ENCODE measurements at regions of chr11 and their contacts with region 1.

Region 1: DNA sequence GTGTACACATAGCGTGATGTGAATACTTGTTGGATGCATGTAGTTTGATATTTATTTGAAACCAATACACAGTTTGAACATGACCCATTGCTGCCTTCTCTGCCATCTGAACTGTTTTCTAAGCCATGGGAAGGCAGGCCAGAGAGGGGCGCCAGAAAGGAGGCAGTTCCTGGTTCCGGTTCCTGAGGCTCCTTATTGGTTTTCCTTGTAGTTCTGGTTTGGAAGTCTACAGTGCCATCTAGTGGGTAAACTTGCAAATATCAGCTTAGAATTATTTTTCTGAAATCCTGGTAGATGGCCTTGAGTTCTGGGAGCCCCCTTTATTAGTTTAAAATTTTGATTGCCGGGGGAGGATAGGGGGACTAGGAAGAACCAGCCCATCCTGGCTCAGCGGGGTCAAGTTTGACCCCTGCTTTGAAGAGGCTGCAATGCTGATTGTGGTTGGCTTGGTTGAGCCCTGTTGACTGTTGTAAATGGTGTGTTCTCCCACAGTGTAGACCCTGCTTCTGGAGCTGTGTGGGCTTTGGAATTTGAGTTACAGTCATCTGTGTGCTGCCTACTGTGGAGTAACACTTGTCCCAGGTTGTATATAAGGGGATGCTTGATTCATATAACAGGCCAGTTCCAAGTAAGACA is 48.4 kb downstream of the GRAMD1B start:
- DNase-seq: peak in 1 of 2 experiments; percentile 62
- H3K4me3 ChIP-seq: no peak overlapping the region
- H3K27ac ChIP-seq: no peak overlapping the region
- H3K4me1 ChIP-seq: peaks cover 2 to 15% (median 8%) of the 10 kb centered on the region in 4 experiments; a peak in 6 of 7 replicates
- H3K27me3 ChIP-seq: no peaks in the 10 kb centered on the region; a peak in 1 of 7 replicates
- CTCF ChIP-seq: peak; percentile 48 to 97 (median 76)
- EP300 ChIP-seq: no peak
- POLR2A ChIP-seq: no peak
- RAD21 ChIP-seq: peak; percentile 89 to 96

Region 2: GRCh38 chr11:123308077-123308476 is 170.4 kb before region 1 on chr11:
- CTCF ChIA-PET with region 1: interaction called, 13 read pairs
- POLR2A ChIA-PET with region 1: interaction called, 5 read pairs
- DNase-seq: no peak
- H3K4me3 ChIP-seq: no peak overlapping the region
- H3K27ac ChIP-seq: no peak overlapping the region
- H3K4me1 ChIP-seq: peaks cover 5 to 10% (median 7%) of the 10 kb centered on the region in 4 experiments; a peak in 6 of 7 replicates
- H3K27me3 ChIP-seq: peaks cover 0 to 9% (median 5%) of the 10 kb centered on the region in 4 experiments; a peak in 5 of 7 replicates
- CTCF ChIP-seq: no peak
- EP300 ChIP-seq: no peak
- POLR2A ChIP-seq: no peak
- RAD21 ChIP-seq: no peak

Region 3: DNA sequence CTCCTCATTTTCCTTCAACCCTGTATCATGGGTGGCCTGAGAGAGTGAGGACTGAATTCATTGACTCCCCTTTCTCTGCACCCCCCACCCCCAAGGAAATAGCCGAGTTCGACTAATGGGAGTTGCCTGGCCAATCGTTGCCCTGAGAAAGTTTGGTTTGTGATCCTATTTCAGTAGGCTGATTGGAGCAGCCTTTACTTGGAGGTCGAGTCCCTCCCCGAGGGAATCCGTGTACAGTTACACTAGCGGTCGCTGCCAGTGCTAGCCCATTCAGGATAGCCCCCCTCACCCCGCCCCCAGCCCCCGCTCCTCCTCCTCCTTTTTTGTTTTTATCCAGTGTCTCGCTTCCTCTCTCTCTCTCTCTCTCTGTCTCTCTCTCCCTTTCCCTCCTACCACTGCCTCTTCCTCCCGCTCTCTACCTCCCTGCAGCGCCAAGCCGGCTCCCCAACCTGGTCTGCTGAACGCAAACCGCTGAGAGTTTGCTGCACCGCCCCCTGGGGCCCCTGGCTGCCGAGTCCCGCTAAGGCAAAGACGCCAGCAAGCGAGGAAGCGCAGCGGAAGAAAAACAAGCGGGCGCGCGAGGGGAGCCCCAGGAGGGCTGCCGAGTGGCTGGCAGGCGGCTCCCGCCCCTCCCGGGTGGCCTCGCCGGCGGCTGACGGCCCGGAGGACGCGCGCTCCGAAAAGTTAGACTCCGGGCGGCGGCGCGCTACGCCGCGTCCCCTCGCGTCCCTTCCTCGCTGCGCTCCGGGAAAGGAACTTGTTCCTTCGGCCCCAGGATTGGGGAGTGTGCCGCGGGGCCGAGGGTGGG is 48.4 kb before region 1 on chr11 and contains the start of gene GRAMD1B:
- CTCF ChIA-PET with region 1: interaction called, 17 read pairs
- POLR2A ChIA-PET with region 1: no interaction called
- DNase-seq: peak; percentile 54 to 87
- H3K4me3 ChIP-seq: peak within 1 kb of the TSS; percentile 68 to 88 (median 82)
- H3K27ac ChIP-seq: no peak within 1 kb of the TSS
- H3K4me1 ChIP-seq: peaks cover 12 to 18% (median 14%) of the 10 kb centered on the region in 4 experiments
- H3K27me3 ChIP-seq: peaks cover 0 to 17% (median under 1%) of the 10 kb centered on the region in 4 experiments; a peak in 4 of 7 replicates
- CTCF ChIP-seq: peak in 1 of 3 experiments; percentile 27; a peak in 1 of 4 replicates
- EP300 ChIP-seq: no peak
- POLR2A ChIP-seq: 0 out of 3 replicates have a peak, but pooled peaks of 1 of the 2 experiments have one; percentile 31
- RAD21 ChIP-seq: peak in 1 of 2 experiments; percentile 27; a peak in 3 of 4 replicates
- total RNA-seq, gene GRAMD1B: 21.2 and 22.4 TPM in 2 replicates

Region 4: GRCh38 chr11:123494195-123495050 is 16.0 kb after region 1 on chr11:
- CTCF ChIA-PET with region 1: interaction called, 16 read pairs
- POLR2A ChIA-PET with region 1: no interaction called
- DNase-seq: no peak
- H3K4me3 ChIP-seq: peak overlapping the region in 1 of 4 experiments; percentile 4; a peak in 2 of 8 replicates
- H3K27ac ChIP-seq: no peak overlapping the region
- H3K4me1 ChIP-seq: peaks cover 7 to 24% (median 16%) of the 10 kb centered on the region in 4 experiments
- H3K27me3 ChIP-seq: no peaks in the 10 kb centered on the region
- CTCF ChIP-seq: no peak
- EP300 ChIP-seq: 0 out of 3 replicates have a peak, but pooled peaks of 1 of the 2 experiments have one; percentile 41
- POLR2A ChIP-seq: no peak
- RAD21 ChIP-seq: no peak

Region 5: DNA sequence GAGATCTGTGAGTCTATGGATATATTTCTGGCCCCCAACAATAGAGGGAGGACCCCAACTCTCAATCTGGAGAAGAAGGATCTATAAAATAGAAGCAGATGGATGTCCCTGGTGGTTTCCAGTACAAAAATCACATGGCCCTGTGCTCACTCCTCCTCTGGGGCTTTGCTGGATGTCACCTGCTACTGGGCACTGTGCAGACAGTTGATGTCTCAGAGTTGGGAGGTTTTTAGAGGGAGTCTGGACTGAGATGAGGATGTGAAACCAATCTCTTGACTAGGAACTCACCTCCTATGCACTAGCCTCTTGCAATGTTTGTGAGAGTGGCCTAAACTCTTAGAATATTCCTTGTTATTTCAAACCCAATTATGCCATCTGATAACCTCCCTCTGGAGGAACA is 68.7 kb after region 1 on chr11:
- CTCF ChIA-PET with region 1: no interaction called
- POLR2A ChIA-PET with region 1: no interaction called
- DNase-seq: no peak
- H3K4me3 ChIP-seq: no peak overlapping the region
- H3K27ac ChIP-seq: no peak overlapping the region
- H3K4me1 ChIP-seq: peaks cover 0 to 10% (median 5%) of the 10 kb centered on the region in 4 experiments; a peak in 4 of 7 replicates
- H3K27me3 ChIP-seq: no peaks in the 10 kb centered on the region
- CTCF ChIP-seq: no peak
- EP300 ChIP-seq: no peak
- POLR2A ChIP-seq: no peak
- RAD21 ChIP-seq: no peak

Measured in H1 (cell line).